ENCODE measurements at regions of chr17 and their contacts with region 1.

Region 1: DNA sequence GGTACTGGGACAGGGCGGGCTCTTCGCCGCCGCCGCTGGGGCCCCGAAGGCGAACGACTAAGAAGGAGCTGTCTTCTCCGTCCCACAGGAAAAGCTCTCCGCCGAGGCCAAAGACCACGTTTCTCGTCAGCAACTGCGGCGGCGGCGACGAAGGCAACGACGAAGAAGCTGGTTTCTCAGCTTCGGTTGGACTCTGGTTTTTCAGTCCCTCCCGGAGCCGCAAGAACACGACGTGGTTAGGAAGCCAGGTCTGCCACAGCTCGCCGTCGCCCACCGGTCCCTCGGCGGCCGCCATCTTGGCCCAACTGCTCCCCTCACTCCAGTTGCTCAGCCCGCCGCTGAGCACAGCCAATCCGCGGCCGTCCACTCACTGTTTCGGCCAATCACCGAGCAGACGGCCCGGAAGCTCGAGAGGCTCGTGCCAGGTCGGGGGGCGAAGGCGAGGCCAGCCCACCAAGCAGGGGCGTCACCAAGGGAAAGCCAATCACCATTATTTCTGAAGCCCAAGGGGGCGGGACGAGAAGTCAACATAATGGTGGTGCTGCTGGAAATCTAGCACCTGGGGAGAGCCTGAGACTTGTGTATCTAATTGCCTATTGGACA is at the start of gene NUP88:
- DNase-seq: peak; percentile 91 to 98 (median 96)
- ATAC-seq: peak; percentile 89 to 91
- H3K4me3 Mint-ChIP-seq: peak within 1 kb of the TSS; percentile 90 to 100 (median 99)
- H3K27ac Mint-ChIP-seq: peak within 1 kb of the TSS; percentile 92 to 100 (median 99)
- H3K4me1 Mint-ChIP-seq: peaks cover 10 to 62% (median 38%) of the 10 kb centered on the region in 4 donors
- H3K27me3 Mint-ChIP-seq: no peaks in the 10 kb centered on the region
- polyA plus RNA-seq, gene NUP88: 108 to 128 (median 123) TPM

Region 2: DNA sequence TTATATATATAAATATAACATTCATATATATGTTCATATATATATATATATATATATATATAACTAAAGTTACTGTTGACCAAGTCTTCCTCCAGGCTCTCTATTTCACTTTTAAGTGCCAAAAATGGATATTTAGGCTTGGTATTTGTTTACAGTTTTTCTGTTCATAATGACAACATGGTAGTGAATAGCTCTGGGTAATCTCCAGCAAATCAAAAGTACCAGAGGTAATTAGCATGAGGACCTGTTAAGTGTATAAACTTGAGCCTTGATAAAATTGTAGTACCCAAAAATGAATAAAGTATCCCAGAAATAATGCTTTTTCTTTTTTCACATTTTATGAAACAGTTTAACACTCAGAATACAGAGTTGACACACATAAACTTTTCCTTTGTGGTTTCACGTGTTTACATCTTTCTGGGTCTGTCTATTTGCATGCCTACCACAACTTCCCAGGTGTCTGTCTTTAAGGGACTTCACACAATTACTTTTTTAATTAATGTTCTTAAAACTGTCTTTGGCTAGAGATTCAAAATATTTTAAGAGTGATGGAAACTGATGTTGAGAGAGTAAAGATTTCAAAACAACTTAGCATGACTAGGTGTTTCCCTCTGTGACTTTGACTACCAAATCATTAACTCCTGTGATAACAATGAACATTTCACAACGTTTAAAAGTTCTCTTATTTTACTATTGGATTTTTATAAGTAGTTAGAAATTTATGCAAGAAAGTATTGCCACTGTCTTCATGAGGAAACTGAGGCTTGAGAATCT is 89.5 kb before region 1 on chr17:
- POLR2A ChIA-PET with region 1: no interaction called
- DNase-seq: peak in 2 of 10 donors; percentile 7 to 12
- ATAC-seq: peak; percentile 58 to 68
- H3K4me3 Mint-ChIP-seq: peak overlapping the region in 7 of 10 donors; percentile 0 to 50 (median 23)
- H3K27ac Mint-ChIP-seq: peak overlapping the region in 7 of 10 donors; percentile 24 to 86 (median 75)
- H3K4me1 Mint-ChIP-seq: peaks cover 19 to 48% (median 37%) of the 10 kb centered on the region in 4 donors
- H3K27me3 Mint-ChIP-seq: no peaks in the 10 kb centered on the region

Region 3: DNA sequence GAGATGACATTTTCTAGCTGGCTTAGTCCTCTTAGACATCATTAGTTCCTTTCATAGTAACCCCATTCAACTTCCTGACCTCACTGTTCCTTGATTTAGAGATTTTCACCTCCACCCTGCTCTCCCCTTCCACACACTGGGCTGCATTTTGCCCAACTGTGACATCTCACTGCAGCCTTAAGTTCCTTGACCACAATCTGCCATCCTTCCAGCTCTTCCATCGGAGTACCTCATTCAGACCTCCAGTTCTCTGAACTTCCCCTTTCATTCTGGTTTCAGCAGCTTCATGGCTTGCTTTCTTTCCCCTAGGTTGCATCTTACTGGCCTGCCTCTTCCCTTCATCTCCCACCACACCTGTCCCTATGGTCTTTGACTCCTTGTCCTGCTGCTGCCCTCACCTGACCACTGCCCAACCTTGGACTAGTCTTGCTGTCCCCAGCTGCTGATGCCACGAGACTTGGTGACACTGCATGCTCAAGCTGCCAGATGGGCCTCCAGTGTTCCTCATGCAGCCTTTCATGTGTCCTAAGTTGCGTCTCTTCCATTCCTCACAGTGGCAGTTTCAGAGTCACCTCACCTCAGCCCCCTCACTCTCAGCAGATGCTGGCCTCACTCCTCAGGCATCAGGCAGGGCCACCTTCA is 40.8 kb before region 1 on chr17:
- POLR2A ChIA-PET with region 1: interaction called, 10 read pairs
- DNase-seq: no peak
- ATAC-seq: no peak
- H3K4me3 Mint-ChIP-seq: no peak overlapping the region
- H3K27ac Mint-ChIP-seq: peak overlapping the region; percentile 49 to 88 (median 82)
- H3K4me1 Mint-ChIP-seq: peaks cover 0 to 6% (median 1%) of the 10 kb centered on the region in 4 donors
- H3K27me3 Mint-ChIP-seq: no peaks in the 10 kb centered on the region

Region 4: DNA sequence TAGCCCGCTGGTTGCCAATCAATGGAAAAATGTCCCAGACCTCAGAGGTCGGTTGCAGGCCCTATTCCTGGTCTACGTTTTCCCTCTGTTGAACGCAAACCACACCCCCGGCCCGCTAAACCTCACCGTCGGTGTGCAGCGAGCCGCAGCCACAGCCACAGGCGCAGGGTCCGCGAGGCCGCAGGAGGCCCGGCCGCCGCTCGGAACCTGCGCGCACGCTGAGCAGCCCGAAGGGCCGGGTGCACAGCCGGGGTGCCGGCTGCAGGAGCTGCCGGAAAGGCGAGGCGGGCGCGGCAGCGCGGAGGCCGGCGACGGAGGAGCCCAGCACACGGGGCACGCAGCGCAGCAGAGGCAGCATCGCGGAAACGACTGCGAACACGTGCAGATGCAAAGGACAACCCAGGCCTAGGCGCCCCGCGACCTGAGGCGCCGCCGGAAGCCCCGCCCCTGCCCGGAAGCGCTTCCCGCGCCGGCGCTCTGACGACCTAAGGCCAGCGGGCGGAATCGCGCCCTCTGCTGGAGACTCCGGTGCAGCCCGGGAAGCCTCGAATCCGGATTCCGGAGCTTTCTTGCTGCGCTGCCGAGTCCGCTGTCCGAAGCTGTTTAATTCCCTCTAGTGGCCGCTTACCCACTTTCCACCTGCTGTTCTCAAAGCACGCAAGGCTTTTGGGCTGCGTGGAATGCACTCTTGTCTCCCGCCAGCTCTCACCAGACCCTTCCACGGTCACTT is 19.4 kb after region 1 on chr17 and contains the start of gene C1QBP:
- POLR2A ChIA-PET with region 1: interaction called, 19 read pairs
- DNase-seq: peak; percentile 85 to 94 (median 91)
- ATAC-seq: peak; percentile 85 to 88
- H3K4me3 Mint-ChIP-seq: peak within 1 kb of the TSS; percentile 77 to 95 (median 90)
- H3K27ac Mint-ChIP-seq: peak within 1 kb of the TSS; percentile 84 to 99 (median 97)
- H3K4me1 Mint-ChIP-seq: peaks cover 9 to 38% (median 34%) of the 10 kb centered on the region in 4 donors
- H3K27me3 Mint-ChIP-seq: no peaks in the 10 kb centered on the region
- polyA plus RNA-seq, gene C1QBP: 276 to 308 (median 304) TPM

Region 5: GRCh38 chr17:5486204-5487124 is 67.0 kb after region 1 on chr17 and contains the start of gene MIS12:
- POLR2A ChIA-PET with region 1: interaction called, 16 read pairs
- DNase-seq: peak; percentile 92 to 99 (median 98)
- ATAC-seq: peak; percentile 92 to 93
- H3K4me3 Mint-ChIP-seq: peak within 1 kb of the TSS; percentile 93 to 97 (median 96)
- H3K27ac Mint-ChIP-seq: peak within 1 kb of the TSS; percentile 96 to 100 (median 98)
- H3K4me1 Mint-ChIP-seq: peaks cover 19 to 63% (median 61%) of the 10 kb centered on the region in 4 donors
- H3K27me3 Mint-ChIP-seq: no peaks in the 10 kb centered on the region
- polyA plus RNA-seq, gene MIS12: 15.6 to 18.3 (median 16.6) TPM

Measured in naive thymus-derived CD8-positive, alpha-beta T cell (primary cell).